ENCODE measurements at regions of chr4 and their contacts with region 1.

Region 1: GRCh38 chr4:128454281-128455075 is 166.9 kb upstream of the PGRMC2 start:
- DNase-seq: peak; percentile 93

Region 2: DNA sequence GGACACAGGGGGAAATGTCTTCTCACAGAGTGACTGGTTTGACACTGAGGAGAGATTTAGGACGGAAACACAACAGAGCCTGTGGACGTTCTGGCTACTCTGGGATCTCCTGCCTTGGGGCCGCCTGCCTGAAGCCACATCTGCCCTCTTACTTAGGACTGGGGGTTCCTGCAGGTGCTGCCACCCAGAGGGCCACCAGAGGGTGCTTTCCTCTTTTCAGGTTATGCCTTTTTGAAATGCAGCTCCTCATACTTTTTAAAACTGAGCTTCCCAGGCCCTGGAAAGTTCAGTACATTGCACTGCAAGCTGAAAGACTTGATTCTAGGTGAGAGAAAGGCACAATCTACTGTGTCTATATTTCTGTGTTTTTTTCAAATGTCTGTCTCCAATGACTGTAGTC is 74.6 kb before region 1 on chr4:
- intact Hi-C with region 1: no loop called
- DNase-seq: no peak

Region 3: DNA sequence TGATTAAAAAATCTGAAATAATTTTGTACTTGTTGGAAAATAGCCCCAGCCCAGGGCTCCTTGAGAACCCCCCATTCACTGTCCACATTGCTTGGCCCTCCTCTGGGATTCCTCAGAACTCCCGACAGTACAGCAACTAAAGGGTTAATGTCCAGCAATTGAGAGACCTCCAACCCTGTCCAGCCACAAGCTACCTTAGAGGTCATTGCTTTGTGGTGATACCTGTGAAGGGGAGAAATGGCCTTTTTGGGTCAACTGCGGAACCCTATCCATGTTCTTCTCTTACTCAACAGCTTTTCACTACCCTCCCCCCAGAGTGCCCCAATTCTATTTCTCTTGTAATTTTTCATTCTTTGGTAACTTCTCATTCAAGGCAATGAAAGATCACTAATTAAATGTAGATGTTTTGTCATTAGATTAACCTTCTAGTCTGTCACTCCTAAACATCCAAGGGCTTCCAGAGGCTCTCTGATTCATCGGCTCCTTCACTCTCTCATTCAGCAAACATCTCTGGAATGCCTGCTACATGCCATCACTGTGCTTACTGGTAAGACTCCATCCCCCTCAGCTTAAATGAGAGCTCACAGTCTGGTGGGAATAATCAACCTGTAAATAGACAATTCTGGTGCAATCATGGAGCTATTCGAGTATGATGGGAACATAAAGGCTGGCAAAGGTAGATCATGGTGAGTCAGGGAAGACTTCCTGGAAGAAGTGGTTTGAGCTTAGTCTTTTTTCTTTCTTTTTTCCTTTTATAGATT is 74.5 kb after region 1 on chr4:
- intact Hi-C with region 1: loop called in 1 of 2 experiments (anchors 10 kb)
- DNase-seq: no peak

Region 4: GRCh38 chr4:128565565-128566186 is 111.2 kb after region 1 on chr4:
- intact Hi-C with region 1: loop called in 1 of 2 experiments (anchors 10 kb)
- DNase-seq: no peak

Region 5: DNA sequence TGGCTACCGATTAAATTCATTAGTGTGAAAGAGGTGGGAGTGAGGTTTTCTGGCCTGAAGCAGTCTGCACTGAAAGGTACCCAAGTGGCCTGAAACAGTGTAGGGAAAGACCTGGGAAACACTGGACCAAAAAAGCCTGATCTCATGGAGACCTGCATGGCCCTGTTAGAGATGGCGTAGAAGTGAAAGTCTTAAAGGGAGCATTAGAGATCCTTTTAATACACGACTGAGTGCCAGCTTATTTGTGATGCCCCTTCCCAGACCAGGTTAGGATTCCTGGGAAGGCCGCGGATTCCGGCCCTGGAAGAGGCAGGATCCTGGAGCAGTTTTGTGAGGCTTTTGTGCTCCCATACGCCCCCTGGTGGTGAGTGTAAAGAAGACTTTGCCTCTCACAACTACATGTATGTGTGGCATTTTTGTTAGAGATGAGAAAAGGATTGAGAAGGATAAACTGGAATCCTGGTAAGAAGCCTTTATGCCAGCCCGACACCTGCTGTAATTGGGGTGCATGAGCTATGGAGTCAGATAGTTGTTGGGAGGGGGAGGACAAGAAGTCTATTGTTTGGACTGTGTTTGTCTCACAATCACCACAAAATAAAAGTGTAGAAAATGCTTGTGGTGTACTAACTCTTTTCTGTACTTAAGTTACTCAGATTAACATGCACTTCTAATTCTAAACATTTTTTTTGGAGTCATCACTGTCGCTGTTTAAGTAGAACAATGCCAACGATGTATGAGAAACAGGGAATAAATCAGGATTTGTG is 409.0 kb after region 1 on chr4:
- intact Hi-C with region 1: loop called in 1 of 2 experiments (anchors 1 kb)
- DNase-seq: peak; percentile 88

Region 6: GRCh38 chr4:129839687-129840086 is 1385.2 kb after region 1 on chr4:
- intact Hi-C with region 1: no loop called
- DNase-seq: no peak